ENCODE measurements at regions of chr11 and their contacts with region 1.

Region 1: DNA sequence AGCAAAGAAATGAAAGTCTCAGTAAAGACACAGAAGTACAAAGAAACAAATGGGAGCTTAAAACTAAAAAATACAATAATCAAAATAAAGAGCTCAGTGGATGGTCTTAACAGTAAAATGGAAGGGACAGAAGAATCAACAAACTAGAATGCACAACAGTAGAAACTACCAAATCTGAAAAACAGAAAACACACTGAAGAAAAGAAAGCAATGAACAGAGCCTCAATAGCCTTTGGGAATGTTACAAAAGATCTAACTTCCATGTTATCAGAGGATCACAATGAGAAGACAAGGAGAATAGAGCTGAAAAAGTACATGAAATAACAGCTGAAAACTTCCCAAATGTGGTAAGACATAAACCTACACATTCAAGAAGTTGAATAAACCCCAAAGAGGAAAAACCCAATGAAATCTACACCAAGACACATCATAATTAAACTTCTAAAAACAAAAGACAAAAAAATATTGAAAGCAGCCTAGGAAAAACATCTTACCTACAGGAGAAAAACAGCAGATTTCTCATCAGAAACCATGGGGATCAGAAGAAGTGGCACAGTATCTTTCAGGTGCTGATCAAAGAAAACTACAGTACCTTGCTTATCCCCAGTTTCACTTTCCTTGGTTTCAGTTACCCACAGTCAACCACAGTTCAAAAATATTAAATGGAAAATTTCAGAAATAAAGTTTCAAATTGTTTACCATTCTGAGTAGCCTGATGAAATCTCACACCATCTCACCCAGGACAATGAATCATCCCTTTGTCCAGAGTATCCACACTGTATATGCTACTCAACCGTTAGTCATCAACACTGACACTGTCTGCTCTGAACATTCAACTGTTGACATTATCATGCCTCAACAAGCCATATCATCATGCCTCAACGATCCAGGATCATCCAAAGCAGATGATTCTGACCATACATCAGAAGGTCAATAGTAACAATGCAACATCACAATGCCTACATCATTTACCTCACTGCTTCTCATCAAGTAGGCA is 22.2 kb downstream of the RRAS2 start:
- DNase-seq: no peak
- H3K4me3 Mint-ChIP-seq: no peak overlapping the region
- H3K27ac Mint-ChIP-seq: peak overlapping the region; percentile 67
- H3K4me1 Mint-ChIP-seq: peaks cover 51% of the 10 kb centered on the region
- H3K27me3 Mint-ChIP-seq: no peaks in the 10 kb centered on the region

Region 2: GRCh38 chr11:14270690-14271542 is 65.9 kb before region 1 on chr11:
- CTCF ChIA-PET with region 1: no interaction called
- POLR2A ChIA-PET with region 1: no interaction called
- intact Hi-C with region 1: no loop called
- DNase-seq: peak; percentile 43
- H3K4me3 Mint-ChIP-seq: peak overlapping the region; percentile 13
- H3K27ac Mint-ChIP-seq: peak overlapping the region; percentile 30
- H3K4me1 Mint-ChIP-seq: peaks cover 27% of the 10 kb centered on the region
- H3K27me3 Mint-ChIP-seq: no peaks in the 10 kb centered on the region

Region 3: DNA sequence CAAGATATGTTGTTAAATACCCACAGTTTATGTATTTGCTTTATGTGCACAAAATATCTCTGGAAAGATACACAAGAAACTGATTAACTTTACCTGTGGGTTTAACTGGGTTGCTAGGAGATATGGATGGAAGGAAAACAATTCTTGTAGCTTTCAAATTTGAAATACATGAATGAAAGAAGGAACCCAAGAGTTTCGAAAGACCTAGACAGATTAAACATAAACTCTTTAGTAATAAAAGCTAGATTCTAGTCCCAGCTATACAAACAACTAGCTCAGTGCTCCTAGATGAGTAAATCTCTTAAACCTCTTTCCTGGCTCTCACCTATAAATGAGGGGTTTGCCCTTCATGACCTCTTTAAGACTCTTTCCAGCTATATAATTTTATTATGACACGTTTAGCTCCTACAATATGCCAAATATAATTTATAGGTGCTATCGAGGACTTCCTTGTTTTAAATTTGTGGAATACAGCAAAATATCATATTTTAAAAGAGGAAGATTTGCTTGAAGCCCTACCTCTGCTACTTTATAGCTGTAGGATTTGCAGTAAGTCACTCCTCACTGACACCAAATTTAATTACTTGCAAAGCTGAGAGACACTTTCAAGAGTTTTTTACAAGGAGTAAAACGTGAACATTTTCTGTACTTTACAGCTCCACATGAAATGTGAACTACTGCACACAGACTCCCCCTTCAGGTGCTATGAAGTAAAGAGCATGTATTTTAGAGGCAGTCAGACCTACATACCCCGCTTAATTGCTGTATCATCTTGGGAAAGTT is 28.5 kb before region 1 on chr11:
- CTCF ChIA-PET with region 1: interaction called, 6 read pairs
- POLR2A ChIA-PET with region 1: no interaction called
- intact Hi-C with region 1: loop called (anchors 2 kb)
- DNase-seq: no peak
- H3K4me3 Mint-ChIP-seq: no peak overlapping the region
- H3K27ac Mint-ChIP-seq: no peak overlapping the region
- H3K4me1 Mint-ChIP-seq: peaks cover 10% of the 10 kb centered on the region
- H3K27me3 Mint-ChIP-seq: no peaks in the 10 kb centered on the region

Region 4: DNA sequence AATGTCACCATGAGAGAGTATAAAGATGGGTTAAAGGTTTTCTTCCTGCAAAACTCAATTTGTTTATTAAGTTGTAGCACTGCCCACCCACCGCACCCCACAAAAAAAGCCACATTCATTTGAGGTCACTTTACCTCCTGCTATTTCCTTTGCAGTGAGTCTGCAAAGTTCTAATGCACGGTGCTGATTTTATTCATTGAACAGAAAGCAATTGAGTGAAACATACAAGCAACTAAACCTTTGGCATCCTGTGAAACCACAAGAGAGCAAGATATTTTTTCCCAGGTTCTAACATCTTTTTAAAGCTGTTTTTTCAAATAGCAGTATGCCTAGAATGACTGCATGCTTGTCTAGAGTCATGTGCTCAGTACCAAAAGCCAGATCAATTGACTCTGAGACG is 16.8 kb before region 1 on chr11:
- CTCF ChIA-PET with region 1: interaction called, 3 read pairs
- POLR2A ChIA-PET with region 1: interaction called, 5 read pairs
- intact Hi-C with region 1: loop called (anchors 2 kb)
- DNase-seq: peak; percentile 54
- H3K4me3 Mint-ChIP-seq: no peak overlapping the region
- H3K27ac Mint-ChIP-seq: peak overlapping the region; percentile 52
- H3K4me1 Mint-ChIP-seq: peaks cover 30% of the 10 kb centered on the region
- H3K27me3 Mint-ChIP-seq: no peaks in the 10 kb centered on the region

Region 5: DNA sequence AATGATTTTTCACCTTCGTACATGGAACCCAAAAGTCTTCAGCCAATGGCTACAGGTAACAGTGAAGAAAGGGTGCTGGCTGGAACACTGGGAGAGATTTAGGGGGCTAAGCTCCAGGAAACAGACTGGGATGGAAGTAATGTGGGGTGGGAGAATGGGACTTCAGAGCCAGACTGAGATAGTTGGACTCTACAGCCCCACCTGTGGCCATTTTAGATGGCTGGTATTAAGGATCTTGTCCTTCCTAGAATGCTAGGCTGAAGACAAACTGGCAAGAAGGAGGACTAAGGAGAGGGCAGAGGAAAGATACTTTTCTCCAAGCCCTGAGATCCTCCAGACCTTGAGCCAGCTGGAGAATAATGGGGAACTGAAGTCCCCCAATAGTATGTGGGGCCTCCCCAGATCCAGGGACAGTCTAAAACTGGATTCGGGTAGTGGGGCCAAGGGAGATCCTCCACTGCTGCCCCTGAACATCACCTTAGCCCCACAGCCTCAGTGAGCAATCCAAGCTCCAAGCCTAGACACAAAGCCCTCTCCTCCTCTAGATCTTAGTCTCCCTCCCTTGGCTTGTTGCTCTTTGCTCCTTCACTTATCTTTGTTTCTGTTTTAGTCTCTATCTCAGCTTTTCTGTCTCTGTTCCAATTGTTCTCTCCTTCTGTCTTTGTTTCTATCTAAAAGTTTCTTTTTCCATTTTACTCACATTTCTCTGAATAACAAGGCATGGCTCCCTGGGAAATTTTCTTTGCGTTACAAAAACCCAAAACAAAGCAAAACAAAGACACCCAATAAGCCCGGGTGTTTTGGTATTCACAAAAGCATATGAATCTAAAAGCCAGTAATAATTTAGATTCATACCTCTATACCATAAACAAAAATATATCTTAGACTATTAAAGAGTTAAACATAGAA is 38.4 kb after region 1 on chr11:
- CTCF ChIA-PET with region 1: no interaction called
- POLR2A ChIA-PET with region 1: no interaction called
- intact Hi-C with region 1: loop called (anchors 1 kb)
- DNase-seq: peak; percentile 33
- H3K4me3 Mint-ChIP-seq: no peak overlapping the region
- H3K27ac Mint-ChIP-seq: peak overlapping the region; percentile 59
- H3K4me1 Mint-ChIP-seq: peaks cover 38% of the 10 kb centered on the region
- H3K27me3 Mint-ChIP-seq: peaks cover 8% of the 10 kb centered on the region